ENCODE measurements at regions of chr14 and their contacts with region 1.

Region 1: DNA sequence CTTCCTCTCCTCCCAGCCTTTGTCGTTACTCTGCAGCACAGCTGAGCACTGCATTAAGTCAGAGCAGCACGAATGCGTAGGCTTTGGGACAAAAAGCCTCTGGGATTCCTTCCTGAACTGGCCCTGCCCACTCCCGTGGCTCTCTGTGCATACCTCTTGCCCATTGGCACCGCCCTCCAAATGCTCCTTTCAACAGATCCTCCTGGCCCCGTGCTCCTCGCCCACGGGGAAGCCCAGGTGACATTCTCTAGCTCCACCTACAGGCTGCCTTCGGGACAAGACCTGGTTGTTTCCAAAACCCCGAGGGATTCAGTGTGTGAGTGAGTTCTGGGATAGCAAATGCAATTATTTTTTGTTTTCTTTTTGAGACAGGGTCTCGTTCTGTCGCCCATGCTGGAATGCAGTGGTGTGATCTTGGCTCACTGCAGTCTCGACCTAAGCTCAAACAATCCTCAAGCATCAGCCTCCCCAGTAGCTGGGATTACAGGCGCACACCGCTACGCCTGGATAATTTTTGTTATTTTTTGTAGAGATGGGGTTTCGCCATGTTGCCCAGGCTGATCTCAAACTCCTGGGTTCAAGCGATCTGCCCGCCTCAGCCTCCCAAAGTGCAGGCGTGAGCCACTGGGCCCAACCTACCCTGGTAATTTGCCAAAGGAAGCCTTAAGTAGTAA is 17.9 kb upstream of the TDRD9 start:
- DNase-seq: peak; percentile 83
- H3K4me3 ChIP-seq: peak overlapping the region in 1 of 2 experiments; percentile 25; a peak in 1 of 4 replicates
- H3K27ac ChIP-seq: no peak overlapping the region
- H3K4me1 ChIP-seq: peaks cover 0 to 16% of the 10 kb centered on the region in 2 experiments; a peak in 1 of 4 replicates
- H3K27me3 ChIP-seq: no peaks in the 10 kb centered on the region
- CTCF ChIP-seq: peak; percentile 80
- EP300 ChIP-seq: no peak
- RAD21 ChIP-seq: peak; percentile 92

Region 2: GRCh38 chr14:103808403-103809001 is 101.9 kb before region 1 on chr14:
- CTCF ChIA-PET with region 1: interaction called, 197 read pairs
- POLR2A ChIA-PET with region 1: interaction called, 3 read pairs
- DNase-seq: peak; percentile 80
- H3K4me3 ChIP-seq: no peak overlapping the region
- H3K27ac ChIP-seq: no peak overlapping the region
- H3K4me1 ChIP-seq: peaks cover 0 to 4% of the 10 kb centered on the region in 2 experiments; a peak in 1 of 4 replicates
- H3K27me3 ChIP-seq: no peaks in the 10 kb centered on the region
- CTCF ChIP-seq: peak; percentile 94
- EP300 ChIP-seq: no peak
- RAD21 ChIP-seq: peak; percentile 93

Region 3: GRCh38 chr14:103867523-103867953 is 42.9 kb before region 1 on chr14:
- CTCF ChIA-PET with region 1: interaction called, 10 read pairs
- POLR2A ChIA-PET with region 1: no interaction called
- DNase-seq: peak; percentile 45
- H3K4me3 ChIP-seq: no peak overlapping the region
- H3K27ac ChIP-seq: no peak overlapping the region
- H3K4me1 ChIP-seq: peaks cover 0 to 14% of the 10 kb centered on the region in 2 experiments; a peak in 1 of 4 replicates
- H3K27me3 ChIP-seq: no peaks in the 10 kb centered on the region; the same call in 1 of the 2 replicates
- CTCF ChIP-seq: no peak
- EP300 ChIP-seq: no peak
- RAD21 ChIP-seq: no peak

Region 4: DNA sequence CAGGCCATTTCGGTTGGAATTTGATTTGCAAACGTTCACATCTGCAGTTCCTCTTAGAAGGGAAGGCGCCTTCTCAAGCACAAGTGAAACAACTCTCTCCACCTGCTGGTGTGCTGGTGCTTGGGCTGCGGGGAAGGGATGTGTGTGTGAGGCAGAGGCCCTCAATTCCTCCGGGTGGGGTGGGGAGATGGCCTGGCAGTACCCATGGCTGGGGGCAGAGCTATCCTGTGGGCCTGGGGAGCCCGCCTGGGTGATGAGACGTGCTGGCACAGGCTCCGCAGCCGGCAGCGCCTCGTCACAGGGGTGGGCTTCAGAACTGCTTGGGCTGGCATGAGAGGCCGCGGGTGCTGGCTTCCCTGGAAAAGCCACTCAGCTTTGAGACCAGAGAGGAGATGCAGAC is 11.1 kb before region 1 on chr14:
- CTCF ChIA-PET with region 1: interaction called, 18 read pairs
- POLR2A ChIA-PET with region 1: no interaction called
- DNase-seq: peak; percentile 32
- H3K4me3 ChIP-seq: no peak overlapping the region
- H3K27ac ChIP-seq: no peak overlapping the region
- H3K4me1 ChIP-seq: peaks cover 0 to 5% of the 10 kb centered on the region in 2 experiments; a peak in 1 of 4 replicates
- H3K27me3 ChIP-seq: no peaks in the 10 kb centered on the region
- CTCF ChIP-seq: no peak
- EP300 ChIP-seq: no peak
- RAD21 ChIP-seq: no peak

Region 5: GRCh38 chr14:103984196-103984595 is 73.8 kb after region 1 on chr14:
- CTCF ChIA-PET with region 1: interaction called, 19 read pairs
- POLR2A ChIA-PET with region 1: no interaction called
- DNase-seq: no peak
- H3K4me3 ChIP-seq: no peak overlapping the region
- H3K27ac ChIP-seq: no peak overlapping the region
- H3K4me1 ChIP-seq: no peaks in the 10 kb centered on the region
- H3K27me3 ChIP-seq: no peaks in the 10 kb centered on the region; the same call in 1 of the 2 replicates
- CTCF ChIP-seq: no peak
- EP300 ChIP-seq: no peak
- RAD21 ChIP-seq: no peak

Region 6: DNA sequence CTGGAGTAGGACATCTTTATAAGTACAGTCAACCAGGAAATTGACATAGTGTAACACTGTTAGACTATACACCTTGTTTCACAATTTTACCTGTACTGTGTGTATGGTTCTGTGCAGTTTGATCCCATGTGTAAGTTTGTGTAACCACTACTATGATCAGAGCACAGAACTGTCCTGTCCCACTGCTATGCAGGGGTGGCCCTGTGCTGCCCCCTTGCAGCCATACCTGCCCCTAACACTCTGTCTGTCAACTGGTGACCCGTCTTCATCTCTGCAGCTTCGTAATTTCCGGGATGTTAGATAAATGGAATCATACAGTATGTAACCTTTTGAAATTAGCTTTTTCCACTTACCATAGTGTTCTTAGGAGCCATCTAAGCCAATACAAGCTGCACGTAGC is 90.6 kb after region 1 on chr14:
- CTCF ChIA-PET with region 1: no interaction called
- POLR2A ChIA-PET with region 1: no interaction called
- DNase-seq: peak; percentile 47
- H3K4me3 ChIP-seq: no peak overlapping the region
- H3K27ac ChIP-seq: no peak overlapping the region
- H3K4me1 ChIP-seq: no peaks in the 10 kb centered on the region
- H3K27me3 ChIP-seq: peaks cover 9% of the 10 kb centered on the region
- CTCF ChIP-seq: peak; percentile 16; the same call in 1 of the 2 replicates
- EP300 ChIP-seq: no peak
- RAD21 ChIP-seq: peak; percentile 55

Region 7: GRCh38 chr14:104034976-104035699 is 124.7 kb after region 1 on chr14:
- CTCF ChIA-PET with region 1: no interaction called
- POLR2A ChIA-PET with region 1: no interaction called
- DNase-seq: peak; percentile 53
- H3K4me3 ChIP-seq: no peak overlapping the region
- H3K27ac ChIP-seq: no peak overlapping the region
- H3K4me1 ChIP-seq: peaks cover 0 to 10% of the 10 kb centered on the region in 2 experiments; a peak in 1 of 4 replicates
- H3K27me3 ChIP-seq: no peaks in the 10 kb centered on the region; the same call in 1 of the 2 replicates
- CTCF ChIP-seq: no peak
- EP300 ChIP-seq: no peak
- RAD21 ChIP-seq: no peak